PC-3 (cell line): ENCODE measurements at regions of chr21 and their contacts with region 1.

Region 1: GRCh38 chr21:42129300-42130266 is 58.5 kb downstream of the UMODL1 start:
- DNase-seq: no peak
- ATAC-seq: no peak
- H3K4me3 ChIP-seq: no peak overlapping the region
- H3K27ac ChIP-seq: no peak overlapping the region
- H3K4me1 ChIP-seq: peaks cover 6% of the 10 kb centered on the region; the same call in 1 of the 2 replicates
- H3K27me3 ChIP-seq: no peaks in the 10 kb centered on the region
- CTCF ChIP-seq: no peak

Region 2: DNA sequence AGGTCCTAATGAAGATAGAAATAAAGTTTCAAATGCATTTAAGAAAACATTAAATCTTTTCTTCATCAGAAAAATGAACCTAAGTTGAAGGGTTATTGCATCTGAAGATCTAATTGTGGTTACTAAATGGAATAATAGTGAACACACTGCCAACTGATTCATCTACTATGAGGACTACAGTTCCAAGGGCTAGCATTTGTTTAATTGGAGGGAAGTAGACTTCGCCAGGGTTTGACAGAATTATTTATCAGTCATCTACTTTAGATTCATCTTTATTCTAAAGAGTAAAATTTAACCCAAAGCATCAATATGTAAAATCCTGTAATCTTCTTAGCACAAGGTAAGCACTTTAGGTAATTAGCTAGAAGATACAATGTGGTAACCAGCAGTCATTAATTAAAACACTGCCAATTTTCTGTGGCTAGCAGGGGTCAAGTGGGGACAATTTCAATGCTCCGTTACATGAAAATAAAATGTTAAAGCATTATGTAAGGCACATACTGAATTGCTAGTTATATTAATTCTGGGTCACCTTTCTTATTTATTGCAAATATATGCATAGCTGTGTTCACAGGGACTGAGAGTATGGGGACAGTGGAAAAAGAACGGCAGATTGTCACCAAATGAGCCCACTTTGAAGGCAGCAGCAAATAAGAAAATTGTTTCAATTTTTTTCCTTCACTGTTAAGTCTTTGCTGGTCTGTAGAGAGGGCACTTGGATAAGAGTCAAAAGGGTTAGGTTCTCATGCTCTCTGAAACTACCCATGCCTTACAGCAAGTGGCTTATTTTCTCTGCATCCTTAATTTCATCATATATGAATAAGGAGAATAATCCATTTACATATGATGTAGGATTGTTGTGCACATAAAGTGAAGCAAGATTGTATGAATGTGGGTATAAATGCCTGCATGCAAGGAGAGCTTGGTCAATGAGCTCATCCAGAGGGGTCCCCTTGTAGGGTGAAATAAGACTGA is 1846.4 kb before region 1 on chr21:
- CTCF ChIA-PET with region 1: no interaction called
- POLR2A ChIA-PET with region 1: no interaction called
- intact Hi-C with region 1: no loop called
- DNase-seq: no peak
- ATAC-seq: no peak
- H3K4me3 ChIP-seq: no peak overlapping the region
- H3K27ac ChIP-seq: no peak overlapping the region
- H3K4me1 ChIP-seq: no peaks in the 10 kb centered on the region
- H3K27me3 ChIP-seq: no peaks in the 10 kb centered on the region
- CTCF ChIP-seq: no peak

Region 3: DNA sequence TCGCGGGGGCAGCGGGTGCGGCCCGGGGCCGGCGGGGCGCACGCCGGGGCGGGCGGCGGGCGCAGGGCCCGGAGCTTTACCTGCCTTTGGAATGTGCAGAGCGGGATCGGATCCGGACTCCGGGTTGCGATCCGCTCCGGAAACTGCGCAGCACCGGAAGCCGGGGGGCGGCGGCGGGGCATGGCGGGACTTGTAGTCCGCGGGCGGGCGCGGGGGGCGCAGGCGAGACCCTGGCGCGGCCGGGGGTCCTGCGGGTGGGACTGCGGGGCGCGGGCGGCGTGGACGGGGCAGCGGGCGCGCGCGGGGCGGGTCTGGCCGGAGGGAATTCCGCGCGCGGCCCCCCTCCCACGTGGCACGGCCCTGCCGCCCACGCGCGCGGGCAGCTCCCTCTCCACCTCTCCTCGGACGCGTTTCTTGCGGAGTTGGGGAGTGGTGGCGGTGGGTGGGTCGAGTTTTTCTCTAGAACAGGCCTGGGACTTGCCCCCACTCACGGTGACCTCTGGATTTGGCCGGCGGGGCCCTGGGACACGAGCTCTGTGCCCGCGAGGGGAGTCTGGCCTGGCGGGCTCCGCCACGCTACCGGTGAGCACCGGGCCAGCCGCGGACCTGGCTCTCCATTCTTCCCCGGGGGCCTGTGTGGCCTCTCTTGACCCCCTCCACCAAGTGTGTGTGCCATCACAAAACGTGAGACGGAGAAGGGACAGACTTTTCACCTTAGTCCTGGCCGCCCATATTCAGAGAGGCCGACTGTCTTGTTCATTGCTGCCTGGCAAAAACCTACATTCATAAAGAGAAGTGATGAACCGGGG is 250.2 kb before region 1 on chr21 and contains the start of gene PRDM15:
- CTCF ChIA-PET with region 1: no interaction called
- POLR2A ChIA-PET with region 1: interaction called, 15 read pairs
- intact Hi-C with region 1: no loop called
- DNase-seq: peak; percentile 75
- ATAC-seq: peak; percentile 74
- H3K4me3 ChIP-seq: peak within 1 kb of the TSS; percentile 74
- H3K27ac ChIP-seq: peak within 1 kb of the TSS; percentile 72
- H3K4me1 ChIP-seq: peaks cover 20% of the 10 kb centered on the region
- H3K27me3 ChIP-seq: no peaks in the 10 kb centered on the region
- CTCF ChIP-seq: no peak
- total RNA-seq, gene PRDM15: 13.4 and 16.8 TPM in 2 replicates

Region 4: DNA sequence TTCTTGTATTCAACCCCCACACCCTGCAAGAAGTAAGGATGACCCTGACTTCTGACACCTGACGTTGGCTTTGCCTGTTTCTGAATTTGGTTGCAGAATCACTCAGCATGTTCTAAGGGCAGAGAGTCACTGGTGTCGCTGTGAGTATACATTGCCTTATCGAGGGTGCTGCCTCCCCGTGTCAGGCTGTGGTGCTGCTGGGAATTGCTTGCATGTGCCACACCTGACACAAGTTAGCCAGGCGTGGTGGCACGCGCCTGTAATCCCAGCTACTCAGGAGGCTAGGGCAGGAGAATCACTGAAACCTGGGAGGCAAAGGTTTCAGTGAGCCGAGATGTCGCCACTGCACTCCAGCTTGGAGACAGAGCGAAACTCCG is 703.8 kb after region 1 on chr21:
- CTCF ChIA-PET with region 1: no interaction called
- POLR2A ChIA-PET with region 1: no interaction called
- intact Hi-C with region 1: no loop called
- DNase-seq: peak; percentile 74
- ATAC-seq: peak; percentile 81
- H3K4me3 ChIP-seq: no peak overlapping the region
- H3K27ac ChIP-seq: no peak overlapping the region
- H3K4me1 ChIP-seq: no peaks in the 10 kb centered on the region
- H3K27me3 ChIP-seq: no peaks in the 10 kb centered on the region; the same call in 1 of the 2 replicates
- CTCF ChIP-seq: peak; percentile 68